ENCODE measurements at regions of chr4 and their contacts with region 1.

Region 1: GRCh38 chr4:37873386-37873785 is 17.5 kb upstream of the TBC1D1 start:
- DNase-seq: no peak
- H3K4me3 ChIP-seq: no peak overlapping the region
- H3K27ac ChIP-seq: no peak overlapping the region
- H3K4me1 ChIP-seq: no peaks in the 10 kb centered on the region
- H3K27me3 ChIP-seq: no peaks in the 10 kb centered on the region
- CTCF ChIP-seq: no peak
- POLR2A ChIP-seq: no peak

Region 2: DNA sequence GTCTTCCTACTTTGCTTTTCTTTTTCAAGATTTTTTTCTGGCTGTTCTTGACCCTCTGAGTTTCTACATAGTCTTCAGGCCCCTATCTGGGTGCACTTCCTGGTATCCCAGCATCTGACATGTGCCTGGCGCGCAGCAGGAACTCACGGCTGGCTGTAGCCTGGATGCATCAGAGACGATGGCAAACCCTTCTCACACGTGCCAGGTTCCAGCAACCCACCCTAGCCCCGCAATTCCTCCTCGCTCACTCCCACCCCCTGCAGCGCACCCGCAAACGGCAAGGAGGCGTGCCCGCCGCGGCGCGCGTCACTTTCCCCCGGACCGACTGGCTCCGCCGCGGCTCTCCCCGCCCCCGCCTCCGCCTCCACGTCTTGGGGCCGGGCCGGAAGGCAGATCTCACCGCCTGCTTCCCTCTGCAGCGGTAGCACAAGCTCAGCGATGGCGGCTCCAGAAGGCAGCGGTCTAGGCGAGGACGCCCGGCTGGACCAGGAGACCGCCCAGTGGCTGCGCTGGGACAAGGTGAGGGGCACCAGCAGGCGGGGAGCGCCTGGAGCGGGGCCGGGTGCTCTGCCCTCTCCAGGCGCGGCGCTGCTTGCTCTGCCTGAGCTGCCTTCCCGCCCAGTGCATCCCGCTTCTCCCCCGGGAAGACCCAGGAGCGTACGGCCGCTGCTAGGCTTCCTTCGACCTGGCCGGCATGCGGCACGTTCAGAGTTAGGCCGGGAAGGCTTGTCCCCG is 46.9 kb before region 1 on chr4 and contains the start of gene PGM2:
- intact Hi-C with region 1: loop called (anchors 10 kb)
- DNase-seq: peak in 1 of 2 donors; percentile 91
- H3K4me3 ChIP-seq: peak within 1 kb of the TSS; percentile 86 to 88
- H3K27ac ChIP-seq: peak within 1 kb of the TSS; percentile 90
- H3K4me1 ChIP-seq: peaks cover 31% of the 10 kb centered on the region
- H3K27me3 ChIP-seq: no peaks in the 10 kb centered on the region
- CTCF ChIP-seq: no peak
- POLR2A ChIP-seq: peak in 1 of 2 donors; percentile 66
- total RNA-seq, gene PGM2: 30.2 TPM

Measured in vagina (tissue), 2 donors.